Naive thymus-derived CD8-positive, alpha-beta T cell (primary cell): ENCODE measurements at regions of chr3 and their contacts with region 1.

Region 1: DNA sequence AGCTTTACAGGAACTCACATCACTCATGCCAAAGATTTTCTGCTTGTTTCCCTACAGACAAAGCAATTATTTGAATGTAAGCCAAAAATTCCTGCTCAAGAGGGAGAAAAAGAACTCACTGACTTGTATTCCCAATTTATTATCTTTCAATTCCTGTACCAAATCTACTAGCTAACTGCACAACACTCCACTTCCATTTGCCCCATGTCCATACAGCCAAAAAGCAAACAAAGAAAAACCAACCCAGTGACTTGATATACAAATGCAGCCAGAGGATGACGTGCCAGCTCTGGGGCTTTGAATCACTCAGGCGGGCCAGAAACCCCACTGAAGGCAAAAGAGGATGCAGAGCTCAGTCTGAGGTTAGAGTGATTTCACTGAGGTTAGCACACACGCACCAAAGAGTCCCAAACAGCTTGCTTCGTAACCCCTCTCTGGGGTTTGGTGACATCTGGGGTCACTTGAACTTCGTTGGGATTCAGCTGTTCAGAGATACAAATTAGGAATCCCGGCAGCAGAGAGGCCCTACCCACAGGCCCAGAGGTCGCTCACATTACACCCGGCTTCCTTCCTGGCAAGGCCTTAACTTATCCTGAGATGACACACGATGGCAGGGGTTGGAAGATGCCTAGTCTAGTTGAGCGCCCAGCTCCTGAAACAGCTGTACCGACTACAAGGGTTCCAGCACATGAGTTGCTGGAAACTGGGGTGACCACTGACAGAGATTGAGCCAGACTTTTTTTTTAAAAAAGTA is 1.6 kb downstream of the RFTN1 start:
- DNase-seq: peak; percentile 44 to 93 (median 84)
- ATAC-seq: peak; percentile 74 to 84
- H3K4me3 Mint-ChIP-seq: peak overlapping the region; percentile 92 to 97 (median 96)
- H3K27ac Mint-ChIP-seq: peak overlapping the region; percentile 89 to 99 (median 99)
- H3K4me1 Mint-ChIP-seq: peaks cover 45 to 88% (median 84%) of the 10 kb centered on the region in 4 donors
- H3K27me3 Mint-ChIP-seq: no peaks in the 10 kb centered on the region

Region 2: DNA sequence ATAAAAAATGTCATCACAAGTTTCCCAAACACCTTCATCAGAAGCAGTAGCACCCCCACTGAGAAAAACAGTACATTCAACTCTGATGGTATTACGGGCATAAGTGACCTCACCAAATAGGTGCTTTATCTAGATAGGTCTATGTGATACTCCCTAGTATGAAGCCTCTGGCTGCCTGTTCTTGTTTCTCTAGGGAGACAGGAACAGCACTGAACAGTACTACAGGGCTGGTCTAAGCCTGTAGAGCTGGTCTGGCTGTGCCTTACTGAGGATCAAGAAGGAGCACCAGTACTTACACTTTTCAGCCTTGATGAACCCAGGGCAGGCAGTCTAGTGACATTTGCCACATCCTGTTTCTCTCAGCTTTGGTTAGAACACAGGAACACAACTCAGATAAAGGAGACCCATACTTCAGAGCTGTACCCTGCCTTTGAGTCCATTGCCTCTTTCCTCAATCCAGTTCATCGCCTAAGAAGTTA is 210.9 kb before region 1 on chr3:
- POLR2A ChIA-PET with region 1: interaction called, 16 read pairs
- DNase-seq: peak in 9 of 10 donors; percentile 49 to 87 (median 75)
- ATAC-seq: peak; percentile 68 to 82
- H3K4me3 Mint-ChIP-seq: peak overlapping the region; percentile 84 to 100 (median 93)
- H3K27ac Mint-ChIP-seq: peak overlapping the region; percentile 86 to 99 (median 96)
- H3K4me1 Mint-ChIP-seq: peaks cover 52 to 99% (median 96%) of the 10 kb centered on the region in 4 donors
- H3K27me3 Mint-ChIP-seq: no peaks in the 10 kb centered on the region

Region 3: GRCh38 chr3:16482770-16483531 is 28.9 kb before region 1 on chr3:
- POLR2A ChIA-PET with region 1: interaction called, 37 read pairs
- DNase-seq: peak in 9 of 10 donors; percentile 18 to 70 (median 36)
- ATAC-seq: peak; percentile 84 to 85
- H3K4me3 Mint-ChIP-seq: peak overlapping the region; percentile 16 to 88 (median 72)
- H3K27ac Mint-ChIP-seq: peak overlapping the region; percentile 49 to 95 (median 90)
- H3K4me1 Mint-ChIP-seq: peaks cover 34 to 88% (median 74%) of the 10 kb centered on the region in 4 donors
- H3K27me3 Mint-ChIP-seq: no peaks in the 10 kb centered on the region

Region 4: DNA sequence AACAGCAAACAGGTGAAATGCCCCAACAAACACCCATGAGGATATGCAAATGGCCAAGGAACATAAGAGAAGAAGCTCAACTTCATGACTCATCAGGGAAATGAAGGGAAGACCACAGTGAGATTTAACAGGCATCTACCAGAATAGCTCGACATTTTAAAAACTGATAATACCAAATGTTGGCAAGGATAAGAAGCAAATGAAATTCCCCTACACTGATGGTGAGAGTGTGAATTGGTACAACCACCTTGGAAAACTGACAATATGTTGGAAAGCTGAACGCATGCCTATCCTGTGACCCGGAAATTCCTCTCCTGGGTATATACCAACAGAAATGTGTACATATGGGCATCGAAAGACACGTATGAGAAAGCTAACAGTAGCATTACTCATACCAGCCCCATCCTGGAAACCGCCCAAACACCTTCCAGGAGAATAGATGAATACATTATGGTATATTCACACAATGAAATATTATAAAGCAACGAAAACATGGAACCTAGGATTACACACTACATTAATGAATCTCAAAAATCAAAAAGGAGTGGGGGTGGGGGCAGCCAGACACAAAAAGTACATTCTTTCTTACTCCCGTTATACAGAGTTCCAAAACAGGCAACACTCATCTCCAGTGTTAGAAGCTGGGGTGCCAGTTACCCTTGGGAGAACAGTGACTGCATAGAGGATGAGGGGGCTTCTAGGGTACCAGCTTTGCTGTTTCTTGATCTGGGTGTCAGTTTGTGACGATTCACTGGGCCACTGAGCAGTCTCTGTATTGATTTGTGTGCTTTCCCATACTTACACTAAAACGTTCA is 15.2 kb before region 1 on chr3:
- POLR2A ChIA-PET with region 1: interaction called, 19 read pairs
- DNase-seq: no peak
- ATAC-seq: peak; percentile 34 to 67
- H3K4me3 Mint-ChIP-seq: peak overlapping the region in 9 of 10 donors; percentile 24 to 74 (median 53)
- H3K27ac Mint-ChIP-seq: peak overlapping the region; percentile 29 to 83 (median 64)
- H3K4me1 Mint-ChIP-seq: peaks cover 40 to 67% (median 64%) of the 10 kb centered on the region in 4 donors
- H3K27me3 Mint-ChIP-seq: no peaks in the 10 kb centered on the region

Region 5: GRCh38 chr3:16715323-16715722 is 203.5 kb after region 1 on chr3:
- POLR2A ChIA-PET with region 1: no interaction called
- DNase-seq: no peak
- ATAC-seq: no peak
- H3K4me3 Mint-ChIP-seq: no peak overlapping the region
- H3K27ac Mint-ChIP-seq: no peak overlapping the region
- H3K4me1 Mint-ChIP-seq: no peaks in the 10 kb centered on the region
- H3K27me3 Mint-ChIP-seq: peaks cover 0 to 6% (median 0%) of the 10 kb centered on the region in 5 donors